Psoas muscle (tissue), 8 donors: ENCODE measurements at regions of chr2 and their contacts with region 1.

Region 1: GRCh38 chr2:178914259-178914849 is 107.1 kb upstream of the TTN start:
- DNase-seq: peak; percentile 82 to 90
- ATAC-seq: peak; percentile 81 to 88 (median 87)
- H3K4me3 ChIP-seq: peak overlapping the region; percentile 0
- H3K27ac ChIP-seq: peak overlapping the region; percentile 86
- H3K4me1 ChIP-seq: peaks cover 42% of the 10 kb centered on the region
- H3K27me3 ChIP-seq: no peaks in the 10 kb centered on the region
- CTCF ChIP-seq: peak; percentile 90

Region 2: DNA sequence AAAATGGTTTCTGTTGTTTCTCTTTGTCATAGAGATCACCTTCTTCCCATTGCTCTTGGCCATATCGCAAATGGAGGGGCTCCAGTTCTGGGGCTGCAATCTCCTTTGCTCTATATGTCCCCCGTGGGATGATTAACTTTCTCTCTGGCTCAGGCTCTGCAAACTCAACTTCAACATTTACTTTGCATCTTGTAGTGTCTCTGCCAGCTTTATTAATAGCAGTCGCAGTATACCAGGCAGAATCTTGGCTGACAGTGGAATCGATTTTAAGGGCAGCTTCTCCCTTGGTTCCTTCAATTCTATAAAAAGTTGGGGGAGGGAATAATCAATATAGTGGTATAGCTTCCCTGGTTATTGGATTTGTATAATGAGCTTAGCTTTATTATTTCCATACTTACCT is 137.6 kb before region 1 on chr2:
- intact Hi-C with region 1: no loop called
- DNase-seq: no peak
- ATAC-seq: peak; percentile 27 to 47 (median 40)
- H3K4me3 ChIP-seq: peak overlapping the region; percentile 48
- H3K27ac ChIP-seq: peak overlapping the region; percentile 59
- H3K4me1 ChIP-seq: peaks cover 85% of the 10 kb centered on the region
- H3K27me3 ChIP-seq: no peaks in the 10 kb centered on the region
- CTCF ChIP-seq: no peak

Region 3: GRCh38 chr2:178796079-178796677 is 118.2 kb before region 1 on chr2:
- intact Hi-C with region 1: loop called (anchors 2 to 5 kb)
- DNase-seq: no peak
- ATAC-seq: no peak
- H3K4me3 ChIP-seq: peak overlapping the region; percentile 80
- H3K27ac ChIP-seq: peak overlapping the region; percentile 96
- H3K4me1 ChIP-seq: peaks cover 51% of the 10 kb centered on the region
- H3K27me3 ChIP-seq: no peaks in the 10 kb centered on the region
- CTCF ChIP-seq: peak; percentile 54

Region 4: DNA sequence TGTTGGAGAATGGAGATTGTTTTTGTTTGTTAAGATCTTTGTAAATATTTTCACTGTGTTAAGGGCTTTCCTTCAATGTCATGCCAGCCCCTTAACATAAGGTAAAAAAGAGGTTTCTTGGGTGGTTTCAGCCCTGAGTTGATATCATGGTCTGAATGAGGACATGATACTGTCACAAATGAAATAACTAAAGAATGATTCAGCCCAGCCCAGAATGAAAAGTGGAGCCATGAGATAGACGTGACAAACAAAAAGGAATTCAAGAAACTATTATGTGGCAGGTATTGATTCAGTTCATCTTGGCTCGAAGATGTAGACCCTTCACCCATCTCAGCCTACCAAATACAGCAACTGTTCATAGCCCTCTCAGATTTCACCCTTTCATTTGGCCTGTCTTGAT is 18.5 kb before region 1 on chr2:
- intact Hi-C with region 1: loop called in 1 of 2 experiments (anchors 2 kb)
- DNase-seq: no peak
- ATAC-seq: peak; percentile 28 to 51 (median 37)
- H3K4me3 ChIP-seq: peak overlapping the region; percentile 14
- H3K27ac ChIP-seq: peak overlapping the region; percentile 85
- H3K4me1 ChIP-seq: peaks cover 76% of the 10 kb centered on the region
- H3K27me3 ChIP-seq: no peaks in the 10 kb centered on the region
- CTCF ChIP-seq: no peak

Region 5: GRCh38 chr2:178976351-178976750 is 62.0 kb after region 1 on chr2:
- intact Hi-C with region 1: no loop called
- DNase-seq: no peak
- ATAC-seq: no peak
- H3K4me3 ChIP-seq: no peak overlapping the region
- H3K27ac ChIP-seq: no peak overlapping the region
- H3K4me1 ChIP-seq: no peaks in the 10 kb centered on the region
- H3K27me3 ChIP-seq: no peaks in the 10 kb centered on the region
- CTCF ChIP-seq: no peak